Pancreas (tissue), 10 donors: ENCODE measurements at regions of chr4 and their contacts with region 1.

Region 1: GRCh38 chr4:3420606-3420955 is 21.2 kb upstream of the HGFAC start:
- DNase-seq: peak in 1 of 6 donors; percentile 44
- ATAC-seq: no peak
- H3K4me3 ChIP-seq: no peak overlapping the region
- H3K27ac ChIP-seq: no peak overlapping the region
- H3K4me1 ChIP-seq: no peaks in the 10 kb centered on the region
- H3K27me3 ChIP-seq: no peaks in the 10 kb centered on the region
- CTCF ChIP-seq: no peak

Region 2: GRCh38 chr4:3193531-3194203 is 226.9 kb before region 1 on chr4:
- intact Hi-C with region 1: no loop called
- DNase-seq: no peak
- ATAC-seq: peak in 2 of 4 donors; percentile 31 to 45
- H3K4me3 ChIP-seq: no peak overlapping the region
- H3K27ac ChIP-seq: no peak overlapping the region
- H3K4me1 ChIP-seq: no peaks in the 10 kb centered on the region
- H3K27me3 ChIP-seq: no peaks in the 10 kb centered on the region
- CTCF ChIP-seq: peak in 1 of 4 donors; percentile 10

Region 3: GRCh38 chr4:3369781-3370674 is 50.6 kb before region 1 on chr4:
- intact Hi-C with region 1: loop called in 1 of 3 experiments (anchors 10 kb)
- DNase-seq: no peak
- ATAC-seq: peak in 2 of 4 donors; percentile 39 to 46
- H3K4me3 ChIP-seq: peak overlapping the region in 1 of 4 donors; percentile 20
- H3K27ac ChIP-seq: peak overlapping the region in 1 of 4 donors; percentile 19
- H3K4me1 ChIP-seq: peaks cover 0 to 4% (median 0%) of the 10 kb centered on the region in 3 donors
- H3K27me3 ChIP-seq: no peaks in the 10 kb centered on the region
- CTCF ChIP-seq: no peak

Region 4: DNA sequence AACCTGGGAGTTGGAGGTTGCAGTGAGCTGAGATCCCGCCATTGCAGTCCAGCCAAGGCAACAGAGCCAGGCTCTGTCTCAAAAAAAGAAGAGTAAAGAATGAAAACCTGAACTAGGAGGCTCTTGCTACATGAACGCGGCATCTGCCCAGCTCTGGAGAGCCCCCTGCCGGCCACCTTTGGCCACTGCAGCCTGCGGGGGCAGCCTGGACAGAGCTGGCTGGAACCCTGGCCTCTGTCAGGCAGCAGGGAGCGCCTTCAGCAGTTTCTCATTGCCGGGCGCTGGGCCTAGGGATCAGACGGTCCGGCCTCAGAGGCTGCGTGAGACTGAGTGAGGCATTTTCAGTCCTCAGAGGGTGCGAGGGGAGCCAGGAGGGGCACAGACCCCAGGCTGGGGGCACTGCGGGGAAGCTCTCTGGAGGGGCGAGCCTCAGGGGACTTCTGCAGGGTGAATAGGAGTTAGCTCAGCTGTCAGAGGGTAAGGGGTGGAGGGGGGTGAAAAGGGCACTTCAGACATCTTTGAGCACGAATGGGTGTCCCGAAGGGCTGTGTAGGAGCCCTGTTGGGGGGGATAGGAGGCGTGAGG is 60.0 kb after region 1 on chr4:
- intact Hi-C with region 1: no loop called
- DNase-seq: peak; percentile 42 to 96 (median 81)
- ATAC-seq: peak; percentile 67 to 90 (median 84)
- H3K4me3 ChIP-seq: no peak overlapping the region
- H3K27ac ChIP-seq: no peak overlapping the region
- H3K4me1 ChIP-seq: no peaks in the 10 kb centered on the region
- H3K27me3 ChIP-seq: no peaks in the 10 kb centered on the region
- CTCF ChIP-seq: peak; percentile 98 to 100 (median 100)